Activated naive CD4-positive, alpha-beta T cell treated with anti-CD3 and anti-CD28 coated beads, Interleukin-2, amount 10 ng/mL, durations not matched to agents 7 days and 5 days (primary cell): ENCODE measurements at regions of chr12 and their contacts with region 1.

Region 1: DNA sequence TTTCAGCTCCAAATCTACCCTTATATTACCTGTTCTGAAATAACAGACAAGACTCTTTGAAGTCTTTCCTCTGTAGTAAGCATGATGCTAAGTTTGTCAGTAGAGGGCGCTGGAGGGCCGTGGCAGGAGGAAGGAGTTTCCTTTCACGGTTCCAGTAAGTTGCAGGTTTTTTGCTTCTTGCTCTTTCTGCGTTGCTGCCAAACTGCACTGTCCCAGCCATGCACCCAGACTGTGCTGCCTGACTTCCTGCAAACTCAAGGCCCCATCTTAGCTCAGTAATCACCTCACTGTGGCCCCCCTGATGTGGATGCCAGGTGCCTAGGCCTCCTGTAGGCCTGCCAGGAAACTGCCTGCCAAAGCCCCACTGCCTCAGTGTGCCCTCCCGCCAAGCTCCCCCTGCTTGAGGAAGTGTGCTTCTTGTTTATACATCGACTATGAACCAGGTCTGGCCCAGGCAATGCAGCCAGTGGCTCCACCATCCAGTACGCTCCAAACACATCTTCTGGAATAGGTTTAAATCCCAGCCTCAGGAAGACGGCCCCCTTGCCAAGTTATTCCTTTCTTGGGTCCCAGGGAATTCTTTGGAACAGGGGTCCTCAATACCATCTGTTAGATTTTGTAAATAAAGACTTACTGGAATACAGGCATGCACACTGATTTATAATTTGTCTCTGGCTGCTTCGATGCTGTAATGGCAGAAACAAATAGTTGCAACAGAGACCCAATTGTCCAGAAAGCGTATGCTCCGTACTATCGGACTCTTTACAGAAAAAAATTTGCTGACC is 193.7 kb upstream of the LRIG3 start:
- DNase-seq: peak; percentile 76
- H3K4me3 Mint-ChIP-seq: no peak overlapping the region
- H3K27ac Mint-ChIP-seq: peak overlapping the region; percentile 31
- H3K4me1 Mint-ChIP-seq: no peaks in the 10 kb centered on the region
- H3K27me3 Mint-ChIP-seq: no peaks in the 10 kb centered on the region

Region 2: GRCh38 chr12:59067083-59067482 is 46.9 kb before region 1 on chr12:
- CTCF ChIA-PET with region 1: no interaction called
- DNase-seq: no peak
- H3K4me3 Mint-ChIP-seq: no peak overlapping the region
- H3K27ac Mint-ChIP-seq: no peak overlapping the region
- H3K4me1 Mint-ChIP-seq: no peaks in the 10 kb centered on the region
- H3K27me3 Mint-ChIP-seq: no peaks in the 10 kb centered on the region

Region 3: DNA sequence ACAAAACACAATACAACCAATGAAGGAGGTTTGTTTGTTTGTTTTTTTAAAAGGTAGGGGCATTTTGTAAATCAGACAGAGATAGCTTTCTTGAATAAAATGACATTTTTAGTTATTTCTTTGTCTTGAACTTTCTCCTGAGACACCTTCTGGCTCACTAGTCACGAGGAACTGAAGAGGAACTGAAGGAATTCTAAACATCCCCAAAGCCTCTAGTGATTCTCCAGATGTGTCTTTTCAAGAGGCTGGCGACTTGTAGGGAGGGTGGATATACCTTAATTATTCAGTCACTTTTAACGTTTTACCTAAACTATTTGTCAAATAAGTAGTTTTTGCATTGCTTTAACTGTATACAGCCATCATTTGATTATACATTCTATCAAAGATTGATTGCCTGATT is 17.4 kb after region 1 on chr12:
- CTCF ChIA-PET with region 1: no interaction called
- DNase-seq: no peak
- H3K4me3 Mint-ChIP-seq: no peak overlapping the region
- H3K27ac Mint-ChIP-seq: no peak overlapping the region
- H3K4me1 Mint-ChIP-seq: no peaks in the 10 kb centered on the region
- H3K27me3 Mint-ChIP-seq: no peaks in the 10 kb centered on the region

Region 4: DNA sequence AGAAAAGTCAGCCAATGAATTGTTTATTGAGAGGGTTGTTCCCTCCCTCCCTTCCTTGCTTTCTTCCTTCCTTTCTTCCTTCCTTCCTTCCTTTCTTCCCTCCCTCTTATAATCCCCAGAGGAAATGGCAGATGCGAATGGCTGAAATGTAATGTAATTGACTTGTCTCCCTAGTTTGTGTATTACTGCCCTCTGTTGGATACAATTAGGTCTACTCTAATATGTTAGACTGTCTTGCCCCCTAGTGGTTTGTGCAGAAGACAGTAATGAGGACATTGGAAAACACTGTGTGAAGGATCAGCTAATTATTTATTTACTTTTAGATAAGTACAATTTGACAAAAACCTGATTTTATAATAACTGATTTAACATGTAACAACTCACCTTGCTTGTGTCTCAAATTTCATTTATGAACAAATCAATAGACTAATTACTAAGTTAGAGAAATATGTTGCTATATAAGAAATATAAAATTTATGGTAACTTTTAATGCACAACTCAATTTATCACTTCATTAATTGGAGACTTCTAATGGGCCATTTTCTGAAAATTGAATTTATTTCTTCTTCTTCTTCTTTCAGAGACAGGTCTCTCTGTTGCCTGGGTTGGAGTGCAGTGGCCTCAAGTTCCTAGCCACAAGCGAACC is 36.1 kb after region 1 on chr12:
- CTCF ChIA-PET with region 1: interaction called, 37 read pairs
- DNase-seq: no peak
- H3K4me3 Mint-ChIP-seq: no peak overlapping the region
- H3K27ac Mint-ChIP-seq: no peak overlapping the region
- H3K4me1 Mint-ChIP-seq: no peaks in the 10 kb centered on the region
- H3K27me3 Mint-ChIP-seq: no peaks in the 10 kb centered on the region

Region 5: GRCh38 chr12:59414051-59414450 is 300.0 kb after region 1 on chr12:
- CTCF ChIA-PET with region 1: no interaction called
- DNase-seq: no peak
- H3K4me3 Mint-ChIP-seq: no peak overlapping the region
- H3K27ac Mint-ChIP-seq: no peak overlapping the region
- H3K4me1 Mint-ChIP-seq: no peaks in the 10 kb centered on the region
- H3K27me3 Mint-ChIP-seq: no peaks in the 10 kb centered on the region